ENCODE measurements at regions of chr19 and their contacts with region 1.

Region 1: GRCh38 chr19:15479391-15480345 is at the start of gene PGLYRP2:
- DNase-seq: peak in 3 of 9 experiments; percentile 24 to 34 (median 31)
- ATAC-seq: peak; percentile 57
- H3K4me3 ChIP-seq: no peak within 1 kb of the TSS
- H3K4me3 Mint-ChIP-seq: peak within 1 kb of the TSS; percentile 53
- H3K27ac ChIP-seq: no peak within 1 kb of the TSS
- H3K27ac Mint-ChIP-seq: peak within 1 kb of the TSS; percentile 37
- H3K4me1 ChIP-seq: peaks cover 24% of the 10 kb centered on the region
- H3K4me1 Mint-ChIP-seq: peaks cover 35% of the 10 kb centered on the region
- H3K27me3 ChIP-seq: no peaks in the 10 kb centered on the region
- H3K27me3 Mint-ChIP-seq: no peaks in the 10 kb centered on the region
- CTCF ChIP-seq: no peak
- total RNA-seq, gene PGLYRP2: not detected

Region 2: DNA sequence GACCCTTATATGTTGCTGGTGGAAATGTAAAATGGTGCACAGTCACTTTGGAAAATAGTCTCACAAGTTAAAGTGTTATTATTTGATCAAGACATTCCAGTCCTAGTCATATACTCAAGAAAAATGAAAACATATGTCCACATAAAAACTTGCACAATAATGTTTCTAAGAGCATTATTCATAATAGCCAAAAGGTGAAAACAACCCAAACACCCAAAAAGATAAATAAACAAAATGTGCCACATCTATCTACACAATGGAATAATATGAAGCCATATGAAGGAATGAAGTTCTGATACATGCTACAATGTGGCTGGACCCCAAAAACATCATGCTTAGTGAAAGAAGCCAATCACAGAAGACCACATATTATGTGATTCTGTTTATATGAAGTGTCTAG is 85.7 kb before region 1 on chr19:
- CTCF ChIA-PET with region 1: no interaction called
- POLR2A ChIA-PET with region 1: no interaction called
- intact Hi-C with region 1: no loop called
- DNase-seq: no peak
- ATAC-seq: no peak
- H3K4me3 ChIP-seq: no peak overlapping the region
- H3K4me3 Mint-ChIP-seq: no peak overlapping the region
- H3K27ac ChIP-seq: no peak overlapping the region
- H3K27ac Mint-ChIP-seq: no peak overlapping the region
- H3K4me1 ChIP-seq: no peaks in the 10 kb centered on the region
- H3K4me1 Mint-ChIP-seq: peaks cover 14% of the 10 kb centered on the region
- H3K27me3 ChIP-seq: no peaks in the 10 kb centered on the region
- H3K27me3 Mint-ChIP-seq: no peaks in the 10 kb centered on the region
- CTCF ChIP-seq: no peak

Region 3: GRCh38 chr19:16814526-16815100 is 1334.9 kb after region 1 on chr19:
- CTCF ChIA-PET with region 1: no interaction called
- POLR2A ChIA-PET with region 1: no interaction called
- intact Hi-C with region 1: loop called in 1 of 2 experiments (anchors 10 kb)
- DNase-seq: no peak
- ATAC-seq: no peak
- H3K4me3 ChIP-seq: no peak overlapping the region
- H3K4me3 Mint-ChIP-seq: no peak overlapping the region
- H3K27ac ChIP-seq: no peak overlapping the region
- H3K27ac Mint-ChIP-seq: no peak overlapping the region
- H3K4me1 ChIP-seq: no peaks in the 10 kb centered on the region
- H3K4me1 Mint-ChIP-seq: no peaks in the 10 kb centered on the region
- H3K27me3 ChIP-seq: peaks cover 0 to 2% of the 10 kb centered on the region in 2 experiments
- H3K27me3 Mint-ChIP-seq: peaks cover 4% of the 10 kb centered on the region
- CTCF ChIP-seq: no peak